Heart left ventricle (tissue), 16 donors: ENCODE measurements at regions of chr19 and their contacts with region 1.

Region 1: GRCh38 chr19:58278157-58279041 is at the start of gene ZNF8:
- DNase-seq: peak; percentile 98
- ATAC-seq: peak; percentile 95 to 96 (median 95)
- H3K4me3 ChIP-seq: peak within 1 kb of the TSS; percentile 75 to 97 (median 83)
- H3K27ac ChIP-seq: peak within 1 kb of the TSS; percentile 91 to 98 (median 94)
- H3K4me1 ChIP-seq: peaks cover 0 to 28% (median 16%) of the 10 kb centered on the region in 12 donors
- H3K27me3 ChIP-seq: no peaks in the 10 kb centered on the region
- CTCF ChIP-seq: peak in 5 of 12 donors; percentile 14 to 40 (median 27)
- POLR2A ChIP-seq: peak in 1 of 2 donors; percentile 72
- total RNA-seq, gene ZNF8: 4.0 to 7.8 (median 5.5) TPM

Region 2: GRCh38 chr19:58228585-58229254 is 49.7 kb before region 1 on chr19 and contains the start of gene ZNF544:
- intact Hi-C with region 1: loop called in 2 of 10 experiments (anchors 2 kb)
- DNase-seq: peak; percentile 80 to 89 (median 83)
- ATAC-seq: peak; percentile 91 to 99 (median 98)
- H3K4me3 ChIP-seq: peak within 1 kb of the TSS; percentile 75 to 97 (median 86)
- H3K27ac ChIP-seq: peak within 1 kb of the TSS; percentile 73 to 95 (median 88)
- H3K4me1 ChIP-seq: peaks cover 0 to 21% (median 15%) of the 10 kb centered on the region in 12 donors
- H3K27me3 ChIP-seq: no peaks in the 10 kb centered on the region
- CTCF ChIP-seq: peak in 4 of 12 donors; percentile 6 to 34 (median 13)
- POLR2A ChIP-seq: peak in 1 of 2 donors; percentile 19
- total RNA-seq, gene ZNF544: 20.8 to 38.7 (median 22.1) TPM